Common myeloid progenitor, CD34-positive (primary cell): ENCODE measurements at regions of chr12 and their contacts with region 1.

Region 1: GRCh38 chr12:94101738-94102660 is 46.4 kb upstream of the PLXNC1 start:
- DNase-seq: peak; percentile 86 to 90 (median 87)
- H3K4me3 ChIP-seq: peak overlapping the region; percentile 35 to 81 (median 69)
- H3K27ac ChIP-seq: no peak overlapping the region
- H3K4me1 ChIP-seq: peaks cover 6 to 36% (median 34%) of the 10 kb centered on the region in 4 experiments
- H3K27me3 ChIP-seq: no peaks in the 10 kb centered on the region

Region 2: GRCh38 chr12:93502802-93503623 is 599.0 kb before region 1 on chr12:
- CTCF ChIA-PET with region 1: interaction called, 169 read pairs
- POLR2A ChIA-PET with region 1: no interaction called
- DNase-seq: peak; percentile 69 to 85 (median 77)
- H3K4me3 ChIP-seq: no peak overlapping the region
- H3K27ac ChIP-seq: no peak overlapping the region
- H3K4me1 ChIP-seq: no peaks in the 10 kb centered on the region
- H3K27me3 ChIP-seq: no peaks in the 10 kb centered on the region

Region 3: DNA sequence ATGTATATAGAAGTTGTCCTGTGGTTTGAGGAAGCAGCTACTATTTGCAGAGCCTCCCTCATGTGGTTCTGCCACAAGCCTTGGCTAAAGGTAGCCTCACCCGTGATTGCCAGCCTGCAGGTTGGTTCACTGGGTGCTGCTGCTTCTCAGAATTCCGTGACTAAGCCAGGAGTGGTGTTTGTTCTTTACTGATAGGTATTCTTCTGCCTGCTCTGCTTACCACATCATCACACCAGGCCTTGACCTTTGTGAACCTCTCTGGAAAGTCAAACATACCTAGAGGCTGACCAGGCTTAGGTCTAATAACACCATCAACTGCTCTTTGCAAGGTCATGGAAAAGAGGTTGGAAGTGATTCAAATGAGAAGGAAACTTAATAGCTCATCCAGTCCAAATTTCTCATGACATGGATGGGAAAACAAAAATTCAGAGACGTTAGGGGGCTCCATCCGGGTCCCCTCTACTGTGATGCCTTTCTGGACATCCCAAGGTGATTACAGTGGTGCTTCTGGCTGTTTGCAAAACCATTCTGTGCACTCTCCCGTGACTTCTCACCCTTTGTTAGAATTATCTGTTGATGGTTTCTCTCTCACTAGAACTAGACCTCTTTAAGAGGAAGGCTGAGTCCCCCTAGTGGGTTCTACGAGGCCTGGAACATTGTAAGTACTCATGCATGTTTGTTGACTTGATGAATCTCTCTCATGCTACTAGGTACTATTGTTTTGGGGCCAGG is 538.0 kb before region 1 on chr12:
- CTCF ChIA-PET with region 1: interaction called, 85 read pairs
- POLR2A ChIA-PET with region 1: interaction called, 6 read pairs
- DNase-seq: peak; percentile 68 to 83 (median 81)
- H3K4me3 ChIP-seq: no peak overlapping the region
- H3K27ac ChIP-seq: peak overlapping the region in 1 of 2 experiments; percentile 1
- H3K4me1 ChIP-seq: peaks cover 0 to 16% (median 4%) of the 10 kb centered on the region in 4 experiments
- H3K27me3 ChIP-seq: no peaks in the 10 kb centered on the region

Region 4: GRCh38 chr12:93766796-93767523 is 335.0 kb before region 1 on chr12:
- CTCF ChIA-PET with region 1: interaction called, 47 read pairs
- POLR2A ChIA-PET with region 1: no interaction called
- DNase-seq: peak in 2 of 3 donors; percentile 43 to 47
- H3K4me3 ChIP-seq: peak overlapping the region in 3 of 7 experiments; percentile 3 to 38 (median 29)
- H3K27ac ChIP-seq: peak overlapping the region in 1 of 2 experiments; percentile 10
- H3K4me1 ChIP-seq: peaks cover 17 to 65% (median 39%) of the 10 kb centered on the region in 4 experiments
- H3K27me3 ChIP-seq: no peaks in the 10 kb centered on the region

Region 5: GRCh38 chr12:93979189-93979588 is 122.8 kb before region 1 on chr12:
- CTCF ChIA-PET with region 1: interaction called, 74 read pairs
- POLR2A ChIA-PET with region 1: no interaction called
- DNase-seq: peak; percentile 56 to 71 (median 68)
- H3K4me3 ChIP-seq: no peak overlapping the region
- H3K27ac ChIP-seq: no peak overlapping the region
- H3K4me1 ChIP-seq: peaks cover 0 to 19% (median 13%) of the 10 kb centered on the region in 4 experiments
- H3K27me3 ChIP-seq: no peaks in the 10 kb centered on the region

Region 6: GRCh38 chr12:94112132-94112531 is 10.1 kb after region 1 on chr12:
- CTCF ChIA-PET with region 1: interaction called, 30 read pairs
- POLR2A ChIA-PET with region 1: no interaction called
- DNase-seq: peak in 2 of 3 donors; percentile 64 to 65
- H3K4me3 ChIP-seq: no peak overlapping the region
- H3K27ac ChIP-seq: no peak overlapping the region
- H3K4me1 ChIP-seq: peaks cover 0 to 10% (median 7%) of the 10 kb centered on the region in 4 experiments
- H3K27me3 ChIP-seq: no peaks in the 10 kb centered on the region

Region 7: DNA sequence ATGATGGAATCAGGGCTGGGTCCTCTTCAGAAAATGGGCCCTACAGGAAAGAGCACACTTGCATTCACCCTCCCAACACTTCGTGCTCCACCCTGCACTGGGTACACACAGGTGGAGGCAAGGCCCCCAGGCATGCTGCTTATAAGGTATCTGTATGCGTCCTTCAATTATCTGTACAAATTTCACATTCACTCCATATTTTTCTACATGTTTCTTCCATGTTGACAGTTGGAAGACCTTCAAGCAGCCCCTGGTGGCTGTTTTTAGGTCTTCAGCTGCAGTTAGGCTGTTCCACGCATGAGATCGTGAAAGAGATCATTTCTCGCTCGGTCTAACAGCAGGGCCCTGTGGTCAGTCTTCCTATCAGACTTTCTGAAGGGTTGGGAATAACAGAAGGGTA is 93.4 kb after region 1 on chr12:
- CTCF ChIA-PET with region 1: no interaction called
- POLR2A ChIA-PET with region 1: no interaction called
- DNase-seq: peak in 2 of 3 donors; percentile 38 to 41
- H3K4me3 ChIP-seq: no peak overlapping the region
- H3K27ac ChIP-seq: no peak overlapping the region
- H3K4me1 ChIP-seq: peaks cover 0 to 24% (median 21%) of the 10 kb centered on the region in 4 experiments
- H3K27me3 ChIP-seq: no peaks in the 10 kb centered on the region